HEK293T (cell line): ENCODE measurements at regions of chr21 and their contacts with region 1.

Region 1: DNA sequence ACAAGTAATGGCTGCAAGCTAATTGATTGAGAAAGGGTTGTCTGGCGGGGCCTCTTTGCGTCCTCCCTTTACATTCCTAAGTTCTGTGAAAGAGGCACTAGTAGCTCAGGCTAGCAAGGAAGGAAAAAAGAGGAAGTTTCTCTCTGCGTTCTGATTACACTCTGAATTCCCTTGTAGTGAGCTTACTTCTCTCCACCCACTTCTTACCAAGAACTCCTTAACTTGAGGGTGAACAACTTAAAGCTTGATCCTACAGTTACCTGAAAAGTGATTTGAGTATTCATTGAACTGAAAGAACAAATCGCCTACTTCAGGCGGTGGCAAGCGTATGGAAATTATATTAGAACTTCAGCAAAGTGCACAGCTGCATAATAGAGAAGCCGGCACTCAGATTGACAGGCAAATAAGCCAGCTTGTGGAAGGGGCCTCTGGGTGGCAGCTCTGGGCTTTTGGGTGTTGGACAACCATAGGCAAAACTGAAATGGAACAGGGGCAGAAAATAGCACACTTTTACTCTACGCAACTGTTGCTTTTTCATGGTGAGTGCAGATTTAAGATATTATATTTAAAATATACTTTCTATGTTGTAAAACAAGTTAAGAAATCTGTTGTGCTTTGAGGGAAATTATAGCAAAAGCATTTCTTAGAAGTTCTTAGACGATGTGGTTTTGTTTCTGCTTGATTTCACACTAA is 464.5 kb downstream of the USP25 start:
- DNase-seq: peak; percentile 60

Region 2: DNA sequence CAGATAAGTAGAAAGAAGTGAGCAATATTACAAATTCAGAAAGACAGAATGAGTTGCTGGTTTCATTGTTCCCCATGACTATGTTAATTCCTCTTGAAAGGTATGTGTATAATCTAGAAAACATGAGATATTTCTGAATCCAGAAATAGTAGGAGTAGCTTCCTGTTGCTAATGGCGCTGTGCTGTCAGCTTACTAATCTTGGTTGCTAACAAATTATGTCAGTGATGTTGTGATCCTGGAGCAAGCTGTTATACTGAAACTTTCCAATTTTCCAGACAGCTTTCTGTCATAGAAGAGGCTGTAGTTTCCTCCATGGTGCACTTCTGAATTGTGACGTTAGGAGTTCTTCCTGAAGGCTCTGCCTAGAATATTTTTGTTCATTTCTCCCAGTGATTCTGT is 92.1 kb before region 1 on chr21:
- CTCF ChIA-PET with region 1: no interaction called
- POLR2A ChIA-PET with region 1: no interaction called
- DNase-seq: no peak

Region 3: GRCh38 chr21:16162953-16163352 is 31.3 kb before region 1 on chr21:
- CTCF ChIA-PET with region 1: interaction called, 3 read pairs
- POLR2A ChIA-PET with region 1: interaction called, 16 read pairs
- DNase-seq: no peak

Region 4: DNA sequence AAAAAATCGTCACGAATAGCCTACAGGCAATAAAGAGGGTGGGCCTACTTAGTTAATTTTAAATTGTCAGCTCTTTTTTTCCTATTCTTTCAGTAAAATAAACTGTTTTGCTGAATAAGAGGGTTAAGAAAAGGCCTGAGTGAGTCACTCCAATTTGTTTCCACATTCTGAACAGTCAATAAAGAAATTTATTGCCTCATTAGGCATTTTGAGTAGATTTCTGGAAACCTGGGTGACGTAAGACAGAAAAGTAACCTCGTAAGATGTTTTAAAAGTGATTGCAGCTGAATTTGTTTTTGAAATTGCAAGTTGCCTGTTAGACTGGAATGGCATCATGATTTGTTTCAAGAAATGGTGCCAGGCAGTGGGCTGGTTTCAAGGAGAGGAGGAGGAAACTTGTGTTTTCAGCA is 25.1 kb before region 1 on chr21:
- CTCF ChIA-PET with region 1: interaction called, 3 read pairs
- POLR2A ChIA-PET with region 1: interaction called, 16 read pairs
- DNase-seq: no peak

Region 5: DNA sequence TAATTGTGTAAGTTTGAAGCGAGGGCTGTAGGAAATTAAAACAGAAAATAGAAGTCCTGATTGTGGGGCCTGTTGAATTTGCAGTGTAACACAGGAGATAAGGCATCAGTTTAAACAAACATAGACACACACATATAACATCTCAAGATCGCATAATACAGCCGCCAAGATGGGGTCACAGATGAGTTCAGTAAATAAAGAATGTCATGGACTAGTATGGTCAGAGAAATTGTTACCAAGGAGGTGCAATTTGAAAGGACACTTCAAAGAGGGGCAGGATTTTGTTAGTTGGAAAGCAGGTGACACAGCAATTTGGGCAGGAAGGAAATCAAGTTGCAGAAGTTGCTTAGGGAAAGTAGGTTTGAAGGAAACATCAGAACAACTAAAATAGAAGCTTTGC is 14.5 kb before region 1 on chr21:
- CTCF ChIA-PET with region 1: no interaction called
- POLR2A ChIA-PET with region 1: interaction called, 10 read pairs
- DNase-seq: no peak